OCI-LY7 (cell line): ENCODE measurements at regions of chr3 and their contacts with region 1.

Region 1: GRCh38 chr3:18988614-18989229 is 159.6 kb upstream of the KCNH8 start:
- DNase-seq: peak; percentile 68
- H3K4me3 ChIP-seq: no peak overlapping the region
- H3K27ac ChIP-seq: no peak overlapping the region
- H3K4me1 ChIP-seq: no peaks in the 10 kb centered on the region
- CTCF ChIP-seq: peak; percentile 96

Region 2: GRCh38 chr3:18559331-18559842 is 429.3 kb before region 1 on chr3:
- CTCF ChIA-PET with region 1: interaction called, 6 read pairs
- POLR2A ChIA-PET with region 1: interaction called, 4 read pairs
- intact Hi-C with region 1: loop called (anchors 2 kb)
- DNase-seq: peak; percentile 70
- H3K4me3 ChIP-seq: no peak overlapping the region
- H3K27ac ChIP-seq: no peak overlapping the region
- H3K4me1 ChIP-seq: no peaks in the 10 kb centered on the region
- CTCF ChIP-seq: peak; percentile 89

Region 3: DNA sequence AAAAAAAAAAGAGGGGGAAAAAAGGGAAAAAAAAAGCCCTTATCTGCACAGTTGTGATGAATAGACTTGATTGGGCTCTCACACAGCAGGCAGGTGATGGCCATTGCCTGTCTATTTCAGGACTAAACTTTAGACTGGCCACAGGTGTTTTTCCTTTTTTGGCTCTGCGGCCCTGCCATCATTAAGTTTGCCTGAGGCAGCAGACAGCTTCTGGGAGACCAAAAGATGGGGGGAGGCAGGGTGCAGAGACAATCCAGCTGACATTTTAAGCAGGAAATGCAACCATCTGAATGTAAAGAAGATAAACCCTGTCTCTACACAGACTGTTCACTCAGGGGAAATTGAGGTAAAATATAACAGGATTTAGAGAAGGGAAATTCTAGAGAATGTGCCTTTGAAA is 135.5 kb before region 1 on chr3:
- CTCF ChIA-PET with region 1: no interaction called
- POLR2A ChIA-PET with region 1: no interaction called
- intact Hi-C with region 1: loop called (anchors 2 kb)
- DNase-seq: peak; percentile 88
- H3K4me3 ChIP-seq: peak overlapping the region; percentile 19
- H3K27ac ChIP-seq: peak overlapping the region; percentile 76
- H3K4me1 ChIP-seq: peaks cover 45% of the 10 kb centered on the region
- CTCF ChIP-seq: no peak